Activated T-helper 1 cell treated with anti-CD3 and anti-CD28 coated beads, Interleukin-12 subunit alpha, Interleukin-12 subunit beta, Interleukin-2, Interleukin-4 antibody, amounts not matched to agents 30 ng/mL and 10 ng/mL and 1 ng/mL, durations not matched to agents 14 hours and 24 hours and 36 hours (primary cell): ENCODE measurements at regions of chr3 and their contacts with region 1.

Region 1: GRCh38 chr3:28050895-28051294 is 190.5 kb upstream of the CMC1 start:
- DNase-seq: no peak
- H3K4me3 Mint-ChIP-seq: no peak overlapping the region
- H3K27ac Mint-ChIP-seq: peak overlapping the region; percentile 18
- H3K4me1 Mint-ChIP-seq: peaks cover 12% of the 10 kb centered on the region
- H3K27me3 Mint-ChIP-seq: no peaks in the 10 kb centered on the region

Region 2: GRCh38 chr3:27721717-27722542 is 329.0 kb before region 1 on chr3 and contains the start of gene EOMES:
- intact Hi-C with region 1: loop called (anchors 2 kb)
- DNase-seq: peak; percentile 67
- H3K4me3 Mint-ChIP-seq: peak within 1 kb of the TSS; percentile 87
- H3K27ac Mint-ChIP-seq: peak within 1 kb of the TSS; percentile 81
- H3K4me1 Mint-ChIP-seq: peaks cover 44% of the 10 kb centered on the region
- H3K27me3 Mint-ChIP-seq: peaks cover 79% of the 10 kb centered on the region
- total RNA-seq, gene EOMES: 29.6 and 30.7 TPM in 2 replicates

Region 3: GRCh38 chr3:27800261-27800660 is 250.6 kb before region 1 on chr3:
- intact Hi-C with region 1: loop called (anchors 2 kb)
- DNase-seq: no peak
- H3K4me3 Mint-ChIP-seq: no peak overlapping the region
- H3K27ac Mint-ChIP-seq: peak overlapping the region; percentile 0
- H3K4me1 Mint-ChIP-seq: peaks cover 17% of the 10 kb centered on the region
- H3K27me3 Mint-ChIP-seq: no peaks in the 10 kb centered on the region

Region 4: DNA sequence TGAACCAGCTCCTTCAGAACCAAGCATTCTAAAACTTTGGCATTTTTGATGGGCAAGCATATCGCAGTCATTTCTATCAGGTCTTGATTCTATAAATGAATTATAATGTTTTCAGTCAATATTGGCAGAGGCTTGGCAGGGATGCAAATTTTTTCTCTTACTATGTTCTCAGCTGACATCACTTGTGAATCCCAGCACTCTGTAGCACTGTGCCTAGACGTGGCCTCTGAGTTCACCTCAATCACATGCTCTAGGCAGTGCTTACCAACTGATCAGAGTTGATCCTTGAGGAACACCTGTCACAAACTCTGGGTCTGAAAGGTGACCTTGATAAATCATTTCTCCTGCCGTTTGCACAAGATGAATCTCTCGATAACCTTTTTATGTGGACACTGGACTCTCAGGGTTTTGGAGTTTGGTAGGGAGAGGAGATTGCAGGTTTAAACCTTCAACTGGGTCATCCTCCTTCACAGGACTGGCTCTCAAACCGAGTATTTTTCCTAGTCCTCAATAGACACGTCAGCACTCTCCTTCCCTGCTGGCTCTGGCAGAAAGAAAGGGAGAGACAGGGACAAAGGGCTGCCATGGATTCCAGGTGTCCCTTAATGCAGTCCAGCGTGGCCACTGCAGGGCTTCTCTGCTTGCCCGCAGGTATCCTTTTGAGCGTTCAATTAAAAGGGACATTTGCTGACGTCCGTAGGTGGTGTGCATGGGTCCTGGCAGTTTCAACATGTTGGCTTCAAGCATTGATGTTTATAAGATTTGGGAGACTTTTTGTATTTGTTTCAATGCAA is 31.8 kb before region 1 on chr3:
- intact Hi-C with region 1: loop called (anchors 5 kb)
- DNase-seq: no peak
- H3K4me3 Mint-ChIP-seq: no peak overlapping the region
- H3K27ac Mint-ChIP-seq: no peak overlapping the region
- H3K4me1 Mint-ChIP-seq: no peaks in the 10 kb centered on the region
- H3K27me3 Mint-ChIP-seq: no peaks in the 10 kb centered on the region